Motor neuron (in vitro differentiated cells): ENCODE measurements at regions of chr5 and their contacts with region 1.

Region 1: DNA sequence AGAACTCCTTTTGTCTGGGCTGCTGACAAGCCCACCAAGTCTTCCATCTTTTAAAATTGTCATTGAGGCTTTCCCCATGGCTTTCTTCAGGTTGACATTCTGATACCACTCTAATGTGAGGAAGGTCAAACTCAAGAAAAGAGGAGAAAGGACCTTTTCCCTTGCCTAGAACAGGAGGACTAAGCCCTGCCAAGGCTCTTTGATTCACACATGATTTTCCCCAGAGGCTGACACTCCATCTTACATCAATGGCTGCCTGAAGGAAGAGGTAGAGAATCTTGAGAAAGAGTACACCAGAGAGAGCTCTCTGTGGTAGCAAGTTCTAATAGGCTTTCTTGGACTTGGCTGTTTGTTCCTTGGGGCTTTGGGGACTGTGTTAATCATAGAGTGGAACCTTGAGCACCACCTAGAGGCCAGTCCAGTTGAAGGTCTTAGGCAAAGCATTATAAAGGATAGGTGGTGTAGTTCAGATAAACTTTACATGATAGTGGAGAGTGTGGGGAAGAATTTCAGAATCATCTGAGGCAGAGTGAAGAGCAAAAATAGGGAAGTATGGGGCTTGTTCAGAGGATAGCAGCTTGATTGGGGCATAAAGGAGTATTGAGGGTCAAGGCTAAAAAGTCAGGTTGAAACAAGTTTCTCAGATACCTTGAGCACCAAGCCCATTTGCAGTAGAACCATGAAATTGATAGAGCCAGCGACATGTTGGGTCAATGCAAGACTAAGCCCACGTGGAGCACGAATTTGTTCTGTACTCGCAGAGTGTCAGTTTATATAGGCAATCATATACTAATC is 36.7 kb downstream of the NDFIP1 start:
- ATAC-seq: peak in 6 of 8 experiments; percentile 63 to 95 (median 84)
- H3K4me3 ChIP-seq: no peak overlapping the region
- H3K27ac ChIP-seq: no peak overlapping the region
- H3K4me1 ChIP-seq: no peaks in the 10 kb centered on the region

Region 2: DNA sequence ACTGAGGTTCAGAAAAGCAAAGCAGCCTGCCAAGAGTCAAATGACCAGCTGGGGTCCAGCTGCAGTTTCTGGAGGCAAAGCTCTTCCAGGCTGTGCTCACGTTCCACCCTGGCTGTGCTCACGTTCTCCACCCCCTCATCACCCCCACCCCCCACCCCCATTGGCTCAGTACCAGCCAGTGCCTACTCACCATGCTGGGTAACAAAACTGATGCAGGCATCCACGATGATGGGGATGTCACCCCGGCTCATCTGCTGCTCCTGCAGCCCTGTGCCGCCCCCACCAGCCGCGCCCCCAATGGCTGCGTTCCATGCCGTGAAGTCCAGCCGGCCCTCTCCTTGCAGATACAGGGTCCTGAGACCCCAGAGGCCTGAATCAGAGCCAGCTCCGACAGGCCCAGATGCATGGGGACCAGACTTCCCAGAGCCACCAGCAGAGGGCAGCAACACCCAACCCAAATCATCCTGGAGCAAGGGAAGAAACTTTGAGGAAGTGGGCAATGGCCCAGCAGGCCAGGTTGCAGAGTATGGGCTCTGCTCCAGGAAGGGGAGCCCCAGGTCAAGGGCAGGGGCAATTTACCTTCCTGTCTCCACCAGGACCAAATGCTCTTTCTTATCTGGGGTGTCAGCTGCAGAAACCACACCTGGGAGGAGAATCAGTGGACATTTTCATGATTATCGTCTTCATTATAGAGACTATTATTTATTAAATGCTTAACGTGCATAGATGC is 480.4 kb before region 1 on chr5:
- in situ Hi-C with region 1: loop called in 1 of 9 experiments (anchors 25 kb)
- ATAC-seq: peak; percentile 80 to 99 (median 90)
- H3K4me3 ChIP-seq: no peak overlapping the region
- H3K27ac ChIP-seq: no peak overlapping the region
- H3K4me1 ChIP-seq: no peaks in the 10 kb centered on the region

Region 3: GRCh38 chr5:142024771-142025304 is 120.5 kb before region 1 on chr5:
- in situ Hi-C with region 1: loop called in 1 of 9 experiments (anchors 25 kb)
- ATAC-seq: peak; percentile 100
- H3K4me3 ChIP-seq: peak overlapping the region; percentile 34 to 42 (median 37)
- H3K27ac ChIP-seq: peak overlapping the region; percentile 76 to 91
- H3K4me1 ChIP-seq: peaks cover 0 to 4% of the 10 kb centered on the region in 2 donors

Region 4: DNA sequence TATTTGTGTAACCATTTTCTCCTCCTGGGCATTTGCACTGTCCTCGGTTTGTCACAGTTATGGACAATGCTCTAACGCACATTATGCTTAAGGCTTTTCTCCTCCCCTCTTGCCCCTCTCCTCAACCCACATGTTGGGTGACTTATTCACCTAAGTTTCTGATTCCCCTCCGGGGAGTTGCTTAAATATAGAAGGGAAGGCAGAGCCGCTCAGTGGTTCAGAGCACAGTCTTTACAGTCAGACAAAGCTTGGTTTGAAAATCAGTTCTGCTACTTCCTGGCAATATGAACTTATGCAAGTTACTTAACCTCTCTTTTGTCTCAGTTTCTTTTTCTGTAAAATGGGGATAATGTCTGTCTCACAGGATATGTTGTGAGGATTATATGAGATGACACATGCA is 220.7 kb after region 1 on chr5:
- in situ Hi-C with region 1: no loop called
- ATAC-seq: no peak
- H3K4me3 ChIP-seq: no peak overlapping the region
- H3K27ac ChIP-seq: no peak overlapping the region
- H3K4me1 ChIP-seq: peaks cover 23 to 25% of the 10 kb centered on the region in 2 donors